ENCODE measurements at regions of chr6 and their contacts with region 1.

Region 1: DNA sequence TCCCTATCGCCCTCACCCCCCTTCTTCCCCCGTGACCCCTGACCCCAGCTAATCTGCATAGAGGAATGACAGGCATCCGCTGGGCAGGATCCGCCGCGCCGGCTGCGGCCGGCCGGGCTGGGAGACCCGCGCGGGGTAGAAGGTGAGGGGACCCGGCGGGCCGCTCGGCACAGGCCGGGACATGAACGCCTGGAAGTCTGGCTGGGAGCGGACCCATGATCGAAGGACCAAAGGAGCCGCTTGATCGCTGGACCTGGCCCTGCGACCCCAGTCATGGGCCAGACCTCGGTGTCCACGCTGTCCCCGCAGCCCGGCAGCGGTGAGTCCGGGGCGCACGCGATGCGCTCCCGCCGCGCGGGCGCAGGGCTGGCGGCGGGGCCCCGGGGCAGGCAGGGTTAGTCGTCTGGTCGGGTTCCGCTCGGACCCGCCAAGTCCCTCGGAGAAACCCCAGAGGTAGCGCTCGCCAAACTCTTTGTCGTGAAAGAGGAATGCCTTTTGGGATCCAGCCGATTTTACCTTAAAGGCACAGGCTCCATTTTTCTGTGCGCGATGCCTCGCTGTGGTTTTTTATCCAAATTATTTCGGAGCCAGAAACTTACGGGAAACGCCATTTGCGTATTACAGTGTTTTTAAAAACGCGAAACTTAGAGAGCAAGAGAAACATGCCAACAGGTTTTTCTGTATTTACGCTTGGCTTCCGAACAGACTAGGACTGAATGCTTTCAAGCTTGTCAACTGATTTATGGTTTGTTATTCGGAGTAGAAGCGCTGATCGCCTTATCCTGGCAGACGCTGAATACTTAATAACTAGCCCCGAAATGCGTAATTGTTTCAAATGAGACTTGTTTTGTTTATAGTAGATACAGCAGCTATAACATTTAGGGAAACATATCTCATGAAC is at the start of gene PHACTR2:
- DNase-seq: peak; percentile 84 to 93 (median 92)
- ATAC-seq: peak; percentile 95
- H3K4me3 ChIP-seq: peak within 1 kb of the TSS; percentile 95
- H3K27ac ChIP-seq: peak within 1 kb of the TSS; percentile 100
- H3K4me1 ChIP-seq: peaks cover 4% of the 10 kb centered on the region
- H3K27me3 ChIP-seq: no peaks in the 10 kb centered on the region
- total RNA-seq, gene PHACTR2: 47.3 to 75.7 (median 59.9) TPM

Region 2: DNA sequence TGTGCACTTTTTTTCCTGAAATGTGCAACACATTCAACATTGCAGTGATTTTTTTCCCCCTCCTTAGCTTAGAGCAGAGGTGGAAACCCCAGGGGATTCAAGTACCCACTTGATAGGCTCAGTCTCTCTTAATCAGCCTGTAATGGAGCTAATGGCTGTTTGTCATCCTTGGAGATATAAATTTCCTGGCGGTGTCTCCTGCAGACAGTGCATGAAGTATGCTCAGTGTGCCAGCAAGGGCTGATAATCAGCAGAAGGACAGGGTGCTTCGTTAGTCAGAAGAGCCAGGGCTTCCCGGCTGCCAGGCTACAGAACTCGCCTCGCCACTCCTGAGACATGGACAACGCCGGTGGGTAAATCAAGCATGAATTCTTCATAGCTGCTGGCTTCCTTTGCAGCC is 70.2 kb before region 1 on chr6:
- intact Hi-C with region 1: loop called in 1 of 4 experiments (anchors 10 kb)
- DNase-seq: no peak
- ATAC-seq: peak; percentile 26 to 51
- H3K4me3 ChIP-seq: peak overlapping the region; percentile 57
- H3K27ac ChIP-seq: peak overlapping the region; percentile 43
- H3K4me1 ChIP-seq: no peaks in the 10 kb centered on the region
- H3K27me3 ChIP-seq: no peaks in the 10 kb centered on the region

Region 3: DNA sequence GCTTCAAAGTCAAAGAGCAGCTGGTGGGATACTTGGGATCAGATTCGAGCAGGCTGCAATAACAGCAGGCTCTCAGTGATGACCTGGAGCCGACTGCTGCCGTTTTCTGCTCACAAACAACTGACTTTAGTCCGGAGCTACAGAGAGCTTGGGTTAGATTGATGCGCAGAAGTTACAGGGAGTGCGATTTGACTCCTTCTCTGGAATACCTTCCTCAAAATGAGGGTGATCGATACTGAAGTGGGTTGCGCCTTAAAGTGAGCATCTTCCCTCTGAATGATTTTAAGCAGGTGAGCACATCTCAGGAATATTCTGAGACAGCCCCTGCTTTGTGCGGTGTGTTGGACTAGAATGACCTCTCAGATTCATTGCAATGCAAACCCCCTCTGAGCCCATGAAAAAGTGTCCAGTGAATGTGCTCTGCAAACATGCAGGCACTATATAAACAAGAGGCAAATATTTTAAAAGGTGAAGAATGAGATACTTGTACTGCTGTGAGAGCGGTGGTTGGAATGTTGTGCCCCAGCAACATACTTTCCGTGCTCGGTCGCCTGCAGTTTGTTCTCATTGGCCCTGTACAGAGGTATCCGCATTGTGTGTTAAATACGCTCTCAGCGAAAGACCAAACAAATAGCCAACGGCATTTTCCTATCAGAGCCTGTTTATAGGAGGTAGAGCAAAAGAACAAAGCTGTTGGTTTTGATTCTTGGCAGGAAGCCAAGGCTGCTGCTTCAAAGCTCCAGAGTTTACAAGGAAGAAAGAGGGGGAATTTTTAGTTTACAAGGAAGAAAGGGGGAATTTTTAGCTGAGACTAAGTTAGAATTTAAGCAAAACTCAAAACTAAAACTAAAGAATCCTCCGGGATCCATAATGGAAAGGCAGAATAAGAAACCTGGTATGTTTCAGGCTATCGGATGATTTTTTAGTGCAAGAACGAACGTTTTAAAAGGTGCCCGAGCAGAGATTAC is 67.3 kb after region 1 on chr6:
- intact Hi-C with region 1: loop called in 1 of 4 experiments (anchors 10 kb)
- DNase-seq: peak in 1 of 3 donors; percentile 46
- ATAC-seq: peak; percentile 4 to 68
- H3K4me3 ChIP-seq: peak overlapping the region; percentile 23
- H3K27ac ChIP-seq: peak overlapping the region; percentile 6
- H3K4me1 ChIP-seq: peaks cover 28% of the 10 kb centered on the region
- H3K27me3 ChIP-seq: no peaks in the 10 kb centered on the region